ENCODE measurements at regions of chr7 and their contacts with region 1.

Region 1: DNA sequence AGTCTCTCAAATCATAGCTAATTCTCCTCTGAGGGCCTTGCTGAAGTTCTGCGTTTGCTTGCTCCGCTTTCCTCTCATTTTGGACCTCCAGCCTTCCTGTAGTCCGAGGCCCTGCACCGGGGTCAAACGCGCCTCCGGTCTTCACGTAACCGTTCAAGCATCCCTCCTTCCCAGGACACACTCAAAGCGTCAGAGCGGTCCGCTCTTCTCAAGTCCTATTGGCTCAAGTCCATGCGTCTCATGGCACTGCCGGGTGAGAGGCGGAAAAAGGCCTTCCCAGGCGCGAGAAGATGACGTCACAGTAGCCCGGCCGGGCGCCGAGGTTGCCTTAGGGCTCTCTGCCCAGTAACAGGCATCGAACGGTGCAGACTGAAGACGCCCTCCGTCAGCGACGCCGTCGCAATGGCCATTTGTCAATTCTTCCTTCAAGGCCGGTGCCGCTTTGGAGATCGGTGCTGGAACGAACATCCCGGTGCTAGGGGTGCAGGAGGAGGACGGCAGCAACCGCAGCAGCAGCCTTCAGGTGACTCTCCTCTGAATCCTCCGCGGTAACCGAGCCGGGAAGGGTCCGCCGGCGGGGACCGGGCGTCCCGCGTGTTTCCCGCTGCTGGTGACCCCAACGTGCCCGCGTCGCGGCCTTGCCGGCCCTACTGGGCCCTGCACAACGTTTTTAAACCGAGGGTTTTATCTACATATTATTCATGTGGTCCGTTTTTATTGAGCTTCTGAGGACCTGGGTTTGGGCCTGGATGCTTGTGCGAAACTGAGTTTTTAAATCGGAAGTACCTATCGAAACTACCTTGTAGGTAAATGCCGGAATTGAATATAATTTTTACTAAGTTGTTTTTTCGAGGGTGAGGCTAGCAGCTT is at the start of gene NUP42:
- DNase-seq: peak; percentile 98
- H3K4me3 ChIP-seq: peak within 1 kb of the TSS; percentile 56 to 85 (median 85)
- H3K27ac ChIP-seq: peak within 1 kb of the TSS; percentile 95
- H3K4me1 ChIP-seq: peaks cover 12% of the 10 kb centered on the region
- H3K27me3 ChIP-seq: no peaks in the 10 kb centered on the region
- CTCF ChIP-seq: no peak
- total RNA-seq, gene NUP42: 29.0 to 36.0 TPM

Region 2: DNA sequence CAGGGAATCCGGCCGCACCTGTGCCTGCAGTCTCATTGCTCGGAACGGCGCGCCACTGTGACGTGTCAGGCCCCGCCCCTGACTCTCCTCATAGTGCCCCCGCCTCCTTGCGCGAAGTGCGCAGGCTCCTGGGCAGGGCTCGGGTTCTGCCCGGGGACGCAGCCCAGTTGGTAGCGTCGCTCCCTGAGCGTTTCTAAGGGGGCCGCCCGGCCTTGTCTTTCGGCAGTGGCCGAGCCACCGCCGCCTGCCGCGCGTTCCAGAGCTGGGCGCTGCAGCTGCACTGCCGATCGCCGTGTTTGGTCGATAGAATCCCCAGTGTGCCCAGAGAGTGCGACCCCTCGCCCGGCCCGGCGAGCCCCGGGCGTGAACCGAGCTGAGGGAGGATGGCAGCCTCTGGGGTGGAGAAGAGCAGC is 76.3 kb before region 1 on chr7 and contains the start of gene KLHL7:
- CTCF ChIA-PET with region 1: no interaction called
- dilution Hi-C with region 1: no loop called
- in situ Hi-C with region 1: no loop called
- intact Hi-C with region 1: loop called (anchors 1 kb)
- DNase-seq: peak; percentile 93
- H3K4me3 ChIP-seq: peak within 1 kb of the TSS; percentile 70 to 99 (median 77)
- H3K27ac ChIP-seq: peak within 1 kb of the TSS; percentile 93
- H3K4me1 ChIP-seq: peaks cover 17% of the 10 kb centered on the region
- H3K27me3 ChIP-seq: no peaks in the 10 kb centered on the region
- CTCF ChIP-seq: no peak
- total RNA-seq, gene KLHL7: 33.3 to 39.2 TPM

Region 3: DNA sequence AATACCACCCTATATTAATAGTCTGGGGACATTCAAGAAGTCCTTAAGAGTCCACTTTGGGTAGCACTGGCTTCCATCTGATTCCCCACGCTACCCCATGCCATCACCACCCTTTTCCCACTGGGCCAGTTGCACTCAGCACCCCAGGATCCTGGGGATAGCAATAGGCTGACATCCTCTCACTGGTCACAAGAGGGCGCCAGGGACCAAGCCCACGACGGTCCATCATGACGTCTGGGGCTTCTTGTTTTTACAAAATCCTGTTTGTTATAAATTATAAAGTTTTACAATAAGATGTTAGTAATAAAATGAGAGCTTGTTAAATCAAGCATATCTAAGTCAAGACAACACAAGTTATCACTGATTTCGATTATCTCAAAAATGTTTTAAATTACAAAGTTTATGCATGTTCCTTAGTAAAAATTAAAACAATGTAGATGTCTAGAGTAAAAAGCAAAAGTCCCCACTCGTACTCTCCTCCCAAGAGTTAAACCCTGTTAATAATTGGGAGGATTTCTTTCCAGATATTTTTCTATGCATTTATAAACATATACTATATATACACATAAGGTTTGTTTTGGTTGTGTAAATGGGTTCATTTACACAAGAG is 80.0 kb after region 1 on chr7:
- CTCF ChIA-PET with region 1: no interaction called
- dilution Hi-C with region 1: no loop called
- in situ Hi-C with region 1: loop called in 1 of 2 experiments (anchors 5 kb)
- intact Hi-C with region 1: loop called (anchors 1 kb)
- DNase-seq: peak; percentile 29
- H3K4me3 ChIP-seq: no peak overlapping the region
- H3K27ac ChIP-seq: no peak overlapping the region
- H3K4me1 ChIP-seq: no peaks in the 10 kb centered on the region
- H3K27me3 ChIP-seq: no peaks in the 10 kb centered on the region
- CTCF ChIP-seq: peak; percentile 93 to 94

Region 4: GRCh38 chr7:23357190-23358093 is 175.5 kb after region 1 on chr7:
- CTCF ChIA-PET with region 1: no interaction called
- dilution Hi-C with region 1: no loop called
- in situ Hi-C with region 1: no loop called
- intact Hi-C with region 1: loop called (anchors 2 kb)
- DNase-seq: peak; percentile 81
- H3K4me3 ChIP-seq: peak overlapping the region in 1 of 3 experiments; percentile 15
- H3K27ac ChIP-seq: peak overlapping the region; percentile 15
- H3K4me1 ChIP-seq: peaks cover 22% of the 10 kb centered on the region
- H3K27me3 ChIP-seq: no peaks in the 10 kb centered on the region
- CTCF ChIP-seq: peak; percentile 28 to 40

Region 5: GRCh38 chr7:23531794-23532489 is 350.0 kb after region 1 on chr7 and contains the start of gene TRA2A:
- CTCF ChIA-PET with region 1: no interaction called
- dilution Hi-C with region 1: no loop called
- in situ Hi-C with region 1: no loop called
- intact Hi-C with region 1: loop called (anchors 5 kb)
- DNase-seq: peak; percentile 90
- H3K4me3 ChIP-seq: peak within 1 kb of the TSS; percentile 79 to 94 (median 90)
- H3K27ac ChIP-seq: peak within 1 kb of the TSS; percentile 99
- H3K4me1 ChIP-seq: peaks cover 9% of the 10 kb centered on the region
- H3K27me3 ChIP-seq: no peaks in the 10 kb centered on the region
- CTCF ChIP-seq: no peak
- total RNA-seq, gene TRA2A: 25.5 to 95.2 TPM